ENCODE measurements at regions of chr1 and their contacts with region 1.

Region 1: GRCh38 chr1:112619520-112620376 is at the start of gene CAPZA1:
- DNase-seq: peak; percentile 86
- H3K4me3 ChIP-seq: peak within 1 kb of the TSS; percentile 98
- H3K27ac ChIP-seq: peak within 1 kb of the TSS; percentile 93
- H3K27me3 ChIP-seq: no peaks in the 10 kb centered on the region
- CTCF ChIP-seq: no peak

Region 2: GRCh38 chr1:112390775-112391602 is 228.8 kb before region 1 on chr1:
- in situ Hi-C with region 1: loop called (anchors 10 kb)
- DNase-seq: peak; percentile 90
- H3K4me3 ChIP-seq: peak overlapping the region; percentile 52
- H3K27ac ChIP-seq: peak overlapping the region; percentile 44
- H3K27me3 ChIP-seq: no peaks in the 10 kb centered on the region
- CTCF ChIP-seq: peak; percentile 91

Region 3: DNA sequence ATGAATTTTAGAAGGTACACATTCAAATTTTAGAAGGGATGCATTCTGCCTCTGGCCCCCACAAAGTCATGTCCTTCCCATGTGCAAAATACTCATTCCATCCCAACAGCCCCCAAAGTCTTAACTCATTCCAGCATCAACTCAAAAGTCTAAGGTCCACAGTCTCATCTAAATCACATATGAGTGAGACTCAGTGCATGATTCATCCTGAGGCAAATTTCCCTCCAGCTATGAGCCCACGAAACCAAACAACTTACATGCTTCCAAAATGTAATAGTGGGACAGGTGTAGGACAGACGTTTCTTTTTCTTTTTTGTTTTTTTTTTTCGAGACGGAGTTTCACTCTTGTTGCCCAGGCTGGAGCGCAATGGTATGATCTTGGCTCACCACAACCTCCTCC is 123.5 kb before region 1 on chr1:
- in situ Hi-C with region 1: loop called (anchors 25 kb)
- DNase-seq: no peak
- H3K4me3 ChIP-seq: no peak overlapping the region
- H3K27ac ChIP-seq: no peak overlapping the region
- H3K27me3 ChIP-seq: no peaks in the 10 kb centered on the region
- CTCF ChIP-seq: no peak

Measured in brain microvascular endothelial cell (primary cell).